Activated B cell treated with CpG ODN at 0.5 μM for 24 hours (primary cell): ENCODE measurements at regions of chr5 and their contacts with region 1.

Region 1: DNA sequence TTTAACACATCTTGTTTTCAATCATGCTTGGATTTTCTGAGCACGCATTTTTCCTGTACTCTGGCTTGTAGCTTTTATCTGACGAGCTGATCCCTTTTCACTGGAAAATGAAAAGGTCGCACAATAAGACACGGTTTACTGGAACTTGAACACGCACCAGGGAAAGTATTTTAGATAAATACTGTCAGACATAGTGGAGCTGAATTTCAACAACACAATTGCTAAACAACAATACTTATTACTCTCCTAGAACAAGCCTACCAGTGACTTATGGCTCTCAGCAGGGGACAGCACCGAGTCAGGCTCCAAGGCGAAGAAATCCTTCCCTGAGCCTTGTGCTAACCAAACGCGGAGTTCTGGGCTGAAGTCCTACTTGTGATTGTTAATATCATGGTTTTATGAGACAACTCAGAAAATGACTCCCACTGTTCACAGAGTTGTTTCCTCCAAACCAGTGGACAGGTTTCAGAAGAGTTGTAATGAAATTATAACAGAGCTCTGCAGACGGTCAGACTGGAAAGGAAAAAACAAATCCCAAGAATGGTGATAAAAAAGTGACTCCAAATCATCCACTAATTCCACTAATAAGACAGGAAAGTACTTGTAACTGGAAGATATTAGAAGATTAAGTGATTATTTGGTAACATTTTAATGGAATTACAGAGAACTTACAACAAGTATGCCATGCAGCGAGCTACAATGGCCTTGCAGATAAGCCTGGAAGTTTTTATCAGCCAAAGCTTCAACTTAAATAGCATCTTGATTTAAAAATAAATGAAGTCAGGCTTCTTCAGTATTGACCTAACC is 359.6 kb downstream of the EBF1 start:
- DNase-seq: no peak
- ATAC-seq: no peak
- H3K4me3 Mint-ChIP-seq: no peak overlapping the region
- H3K27ac Mint-ChIP-seq: peak overlapping the region; percentile 27
- H3K4me1 Mint-ChIP-seq: peaks cover 62% of the 10 kb centered on the region
- H3K27me3 Mint-ChIP-seq: no peaks in the 10 kb centered on the region
- CTCF ChIP-seq: no peak

Region 2: GRCh38 chr5:158751961-158752655 is 12.0 kb after region 1 on chr5:
- CTCF ChIA-PET with region 1: no interaction called
- POLR2A ChIA-PET with region 1: interaction called, 4 read pairs
- intact Hi-C with region 1: loop called (anchors 1 kb)
- DNase-seq: no peak
- ATAC-seq: peak; percentile 83
- H3K4me3 Mint-ChIP-seq: peak overlapping the region; percentile 71
- H3K27ac Mint-ChIP-seq: peak overlapping the region; percentile 84
- H3K4me1 Mint-ChIP-seq: peaks cover 92% of the 10 kb centered on the region
- H3K27me3 Mint-ChIP-seq: no peaks in the 10 kb centered on the region
- CTCF ChIP-seq: no peak

Region 3: GRCh38 chr5:158801268-158801667 is 61.1 kb after region 1 on chr5:
- CTCF ChIA-PET with region 1: no interaction called
- POLR2A ChIA-PET with region 1: interaction called, 12 read pairs
- intact Hi-C with region 1: no loop called
- DNase-seq: no peak
- ATAC-seq: no peak
- H3K4me3 Mint-ChIP-seq: no peak overlapping the region
- H3K27ac Mint-ChIP-seq: no peak overlapping the region
- H3K4me1 Mint-ChIP-seq: peaks cover 41% of the 10 kb centered on the region
- H3K27me3 Mint-ChIP-seq: no peaks in the 10 kb centered on the region
- CTCF ChIP-seq: no peak

Region 4: GRCh38 chr5:158910782-158911692 is 170.9 kb after region 1 on chr5:
- CTCF ChIA-PET with region 1: no interaction called
- POLR2A ChIA-PET with region 1: interaction called, 11 read pairs
- intact Hi-C with region 1: no loop called
- DNase-seq: no peak
- ATAC-seq: peak; percentile 72
- H3K4me3 Mint-ChIP-seq: peak overlapping the region; percentile 61
- H3K27ac Mint-ChIP-seq: peak overlapping the region; percentile 74
- H3K4me1 Mint-ChIP-seq: peaks cover 97% of the 10 kb centered on the region
- H3K27me3 Mint-ChIP-seq: no peaks in the 10 kb centered on the region
- CTCF ChIP-seq: no peak